Panc1 (cell line): ENCODE measurements at regions of chr11 and their contacts with region 1.

Region 1: GRCh38 chr11:65888163-65888814 is at the start of gene FIBP:
- DNase-seq: no peak
- ATAC-seq: peak; percentile 62
- H3K4me3 ChIP-seq: peak within 1 kb of the TSS; percentile 88 to 93
- H3K27ac ChIP-seq: peak within 1 kb of the TSS; percentile 98
- H3K4me1 ChIP-seq: peaks cover 51% of the 10 kb centered on the region
- H3K27me3 ChIP-seq: no peaks in the 10 kb centered on the region
- CTCF ChIP-seq: peak; percentile 99
- total RNA-seq, gene FIBP: 105 TPM

Region 2: DNA sequence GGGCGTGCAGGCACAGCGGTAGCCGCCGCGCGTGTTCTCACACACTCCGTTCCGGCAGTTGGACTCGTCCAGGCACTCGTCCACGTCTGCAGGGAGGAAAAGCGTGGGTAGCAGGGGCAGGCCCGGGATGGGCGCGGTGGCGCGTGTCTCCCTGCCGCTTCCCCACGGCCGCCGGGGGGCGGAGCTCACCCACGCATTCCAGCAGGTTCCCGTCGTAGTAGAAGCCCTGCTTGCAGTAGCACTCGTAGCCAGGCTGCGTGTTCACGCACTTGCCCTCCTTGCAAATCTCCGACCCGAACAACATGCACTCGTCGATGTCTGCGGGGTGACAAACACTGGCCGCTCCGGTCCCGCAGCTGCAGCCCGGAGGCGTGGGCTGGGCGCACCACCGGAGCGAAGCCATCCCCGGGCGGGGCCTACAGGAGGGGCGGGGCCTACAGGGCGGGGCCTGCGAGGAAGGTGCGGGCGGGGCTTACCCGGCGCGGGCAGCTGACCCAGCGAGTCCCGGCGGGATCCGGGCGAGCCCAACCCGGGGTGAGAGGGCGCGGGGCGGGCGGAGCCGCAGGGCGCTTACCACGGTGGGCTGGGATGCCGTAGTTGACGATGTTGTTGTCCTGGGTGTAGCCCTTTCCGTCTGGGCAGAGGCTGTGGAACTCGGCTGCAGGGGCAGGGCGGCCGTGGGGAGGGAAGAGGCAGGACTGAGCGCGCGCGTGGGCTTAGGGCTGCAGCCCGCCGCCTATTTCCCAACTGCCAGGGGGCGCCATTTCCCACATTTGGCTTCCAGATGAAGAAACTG is 347.8 kb before region 1 on chr11:
- CTCF ChIA-PET with region 1: no interaction called
- POLR2A ChIA-PET with region 1: no interaction called
- in situ Hi-C with region 1: no loop called
- intact Hi-C with region 1: no loop called
- DNase-seq: no peak
- ATAC-seq: peak; percentile 83
- H3K4me3 ChIP-seq: peak overlapping the region; percentile 64 to 68
- H3K27ac ChIP-seq: peak overlapping the region; percentile 79
- H3K4me1 ChIP-seq: peaks cover 18% of the 10 kb centered on the region
- H3K27me3 ChIP-seq: no peaks in the 10 kb centered on the region
- CTCF ChIP-seq: peak; percentile 90; the same call in 1 of the 2 replicates

Region 3: GRCh38 chr11:65615229-65615941 is 272.9 kb before region 1 on chr11 and contains the start of gene PCNX3:
- CTCF ChIA-PET with region 1: no interaction called
- POLR2A ChIA-PET with region 1: interaction called, 13 read pairs
- in situ Hi-C with region 1: no loop called
- intact Hi-C with region 1: no loop called
- DNase-seq: peak; percentile 100
- ATAC-seq: peak; percentile 88
- H3K4me3 ChIP-seq: peak within 1 kb of the TSS; percentile 88 to 97
- H3K27ac ChIP-seq: peak within 1 kb of the TSS; percentile 92
- H3K4me1 ChIP-seq: peaks cover 40% of the 10 kb centered on the region
- H3K27me3 ChIP-seq: no peaks in the 10 kb centered on the region
- CTCF ChIP-seq: no peak
- total RNA-seq, gene PCNX3: 74.5 TPM

Region 4: DNA sequence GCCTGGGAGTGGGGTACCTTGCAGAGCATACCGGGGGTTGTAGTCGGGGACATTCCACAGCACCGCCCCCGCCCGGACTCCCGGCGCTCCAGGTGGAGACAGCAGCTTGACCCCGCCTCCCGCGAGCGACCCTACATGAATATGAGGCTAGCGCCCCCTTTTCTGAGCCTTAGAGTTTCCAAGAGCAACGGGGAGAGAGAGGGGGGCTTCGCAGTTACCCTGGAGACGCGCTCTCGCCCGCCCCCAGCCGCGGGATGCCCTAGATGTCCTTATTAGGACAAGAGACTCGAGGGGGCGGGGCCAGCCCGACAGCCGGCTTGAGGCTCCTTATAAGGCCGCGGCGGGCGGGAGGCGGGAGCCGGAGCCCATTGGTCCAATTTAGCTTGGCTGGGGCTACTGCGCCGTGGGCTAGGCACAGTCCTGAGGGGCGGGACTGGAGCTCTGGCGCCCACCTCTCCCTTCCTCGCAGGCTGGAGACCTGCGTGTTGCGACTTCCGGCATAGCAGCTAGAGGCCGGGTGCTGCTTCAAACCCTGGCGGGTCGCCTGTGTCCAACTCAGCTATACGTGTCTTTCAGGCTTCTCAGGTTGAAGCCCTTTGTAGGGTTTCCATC is 29.0 kb before region 1 on chr11:
- CTCF ChIA-PET with region 1: interaction called, 22 read pairs
- POLR2A ChIA-PET with region 1: interaction called, 10 read pairs
- in situ Hi-C with region 1: no loop called
- intact Hi-C with region 1: no loop called
- DNase-seq: peak; percentile 88
- ATAC-seq: peak; percentile 74
- H3K4me3 ChIP-seq: peak overlapping the region; percentile 85 to 99
- H3K27ac ChIP-seq: peak overlapping the region; percentile 98
- H3K4me1 ChIP-seq: peaks cover 45% of the 10 kb centered on the region
- H3K27me3 ChIP-seq: no peaks in the 10 kb centered on the region
- CTCF ChIP-seq: no peak

Region 5: GRCh38 chr11:65900125-65900898 is 12.0 kb after region 1 on chr11 and contains the start of gene FOSL1:
- CTCF ChIA-PET with region 1: interaction called, 11 read pairs
- POLR2A ChIA-PET with region 1: interaction called, 13 read pairs
- in situ Hi-C with region 1: no loop called
- intact Hi-C with region 1: no loop called
- DNase-seq: no peak
- ATAC-seq: peak; percentile 69
- H3K4me3 ChIP-seq: peak within 1 kb of the TSS; percentile 82 to 89
- H3K27ac ChIP-seq: peak within 1 kb of the TSS; percentile 99
- H3K4me1 ChIP-seq: peaks cover 58% of the 10 kb centered on the region
- H3K27me3 ChIP-seq: no peaks in the 10 kb centered on the region
- CTCF ChIP-seq: no peak
- total RNA-seq, gene FOSL1: 186 TPM

Region 6: DNA sequence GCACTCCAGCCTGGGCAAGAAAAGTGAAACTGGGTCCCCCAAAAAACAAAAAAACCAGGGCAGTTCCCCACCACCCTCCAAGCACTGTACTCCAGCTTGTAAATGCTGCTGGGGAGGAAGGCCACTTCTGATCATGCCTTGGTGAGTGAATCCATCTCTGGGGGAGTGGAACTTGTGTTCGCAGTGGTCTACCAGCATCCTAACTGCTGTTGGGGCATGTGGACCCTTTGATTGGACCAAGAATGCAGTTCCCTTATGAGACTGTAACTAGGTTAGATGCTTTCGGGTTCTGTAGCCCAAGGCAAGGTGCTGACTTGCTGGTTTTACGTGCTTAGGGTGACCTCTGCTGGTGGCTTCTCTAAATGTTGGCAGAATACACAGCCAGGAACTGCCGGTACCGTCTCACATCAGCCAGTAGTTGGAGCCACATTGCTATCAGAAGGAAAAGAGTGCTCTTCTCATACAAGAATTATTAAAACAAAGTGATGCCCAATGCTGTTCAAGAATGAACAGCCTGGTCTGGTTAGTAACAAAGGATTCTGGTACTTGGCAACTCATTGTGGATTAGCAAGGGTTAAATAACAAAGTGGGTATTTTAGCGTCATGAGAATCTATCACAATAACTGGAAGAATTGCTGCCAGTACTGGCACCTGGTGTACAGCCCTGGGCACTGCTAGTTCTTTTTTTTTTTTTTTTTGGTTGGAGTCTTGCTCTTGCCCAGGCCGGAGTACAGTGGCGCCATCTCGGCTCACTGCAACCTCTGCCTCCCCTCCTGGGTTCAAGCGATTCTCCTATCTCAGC is 100.7 kb after region 1 on chr11:
- CTCF ChIA-PET with region 1: interaction called, 10 read pairs
- POLR2A ChIA-PET with region 1: interaction called, 10 read pairs
- in situ Hi-C with region 1: no loop called
- intact Hi-C with region 1: loop called (anchors 2 kb)
- DNase-seq: peak; percentile 95
- ATAC-seq: peak; percentile 98
- H3K4me3 ChIP-seq: no peak overlapping the region
- H3K27ac ChIP-seq: no peak overlapping the region
- H3K4me1 ChIP-seq: no peaks in the 10 kb centered on the region
- H3K27me3 ChIP-seq: no peaks in the 10 kb centered on the region
- CTCF ChIP-seq: peak; percentile 99